ENCODE measurements at regions of chr19 and their contacts with region 1.

Region 1: DNA sequence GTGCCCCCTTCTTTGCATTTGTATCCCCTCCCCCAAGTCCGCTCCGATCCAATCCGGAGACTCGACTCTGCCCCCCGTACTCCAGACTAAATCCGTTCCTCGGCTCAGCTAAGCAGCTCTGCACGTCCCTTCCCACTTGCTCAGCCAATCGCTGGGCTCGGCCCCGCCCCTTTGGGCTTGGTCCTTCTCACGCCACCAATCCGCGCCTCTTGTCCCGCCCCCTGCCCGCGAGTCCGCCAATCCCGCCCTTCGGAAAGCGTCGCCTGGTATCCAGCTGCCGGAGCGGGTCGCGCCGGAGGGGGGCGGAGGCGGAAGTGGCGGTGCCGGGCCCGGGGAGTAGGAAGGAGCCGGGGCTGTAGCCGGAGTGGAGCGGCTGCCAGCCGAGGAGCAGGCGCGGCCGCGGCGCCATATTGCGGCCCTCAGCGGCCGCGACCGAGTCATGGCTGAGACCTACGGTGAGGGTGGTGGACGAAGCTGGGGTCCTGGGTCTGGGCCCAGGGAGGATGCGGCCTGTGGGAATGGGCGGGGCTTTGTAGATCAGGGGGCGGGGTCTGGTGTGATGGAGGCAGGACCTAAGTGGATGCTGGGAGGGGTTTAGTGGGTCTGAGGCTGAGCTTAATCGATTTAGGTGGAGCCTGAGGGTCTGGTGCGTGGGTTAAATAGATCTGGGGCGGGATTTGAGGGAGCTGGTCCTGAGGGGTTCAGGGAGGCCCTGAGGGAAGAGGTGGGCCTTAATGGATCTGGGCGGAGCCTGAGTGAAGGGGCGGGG is at the start of gene RAB4B:
- DNase-seq: peak; percentile 100
- H3K4me3 ChIP-seq: peak within 1 kb of the TSS; percentile 63 to 80 (median 68)
- H3K27ac ChIP-seq: peak within 1 kb of the TSS; percentile 94 to 99 (median 96)
- H3K4me1 ChIP-seq: peaks cover 0 to 22% (median 14%) of the 10 kb centered on the region in 4 donors
- H3K27me3 ChIP-seq: no peaks in the 10 kb centered on the region
- CTCF ChIP-seq: no peak
- EP300 ChIP-seq: no peak
- POLR2A ChIP-seq: peak; percentile 17 to 87
- total RNA-seq, gene RAB4B: 15.6 to 21.3 (median 19.2) TPM

Region 2: DNA sequence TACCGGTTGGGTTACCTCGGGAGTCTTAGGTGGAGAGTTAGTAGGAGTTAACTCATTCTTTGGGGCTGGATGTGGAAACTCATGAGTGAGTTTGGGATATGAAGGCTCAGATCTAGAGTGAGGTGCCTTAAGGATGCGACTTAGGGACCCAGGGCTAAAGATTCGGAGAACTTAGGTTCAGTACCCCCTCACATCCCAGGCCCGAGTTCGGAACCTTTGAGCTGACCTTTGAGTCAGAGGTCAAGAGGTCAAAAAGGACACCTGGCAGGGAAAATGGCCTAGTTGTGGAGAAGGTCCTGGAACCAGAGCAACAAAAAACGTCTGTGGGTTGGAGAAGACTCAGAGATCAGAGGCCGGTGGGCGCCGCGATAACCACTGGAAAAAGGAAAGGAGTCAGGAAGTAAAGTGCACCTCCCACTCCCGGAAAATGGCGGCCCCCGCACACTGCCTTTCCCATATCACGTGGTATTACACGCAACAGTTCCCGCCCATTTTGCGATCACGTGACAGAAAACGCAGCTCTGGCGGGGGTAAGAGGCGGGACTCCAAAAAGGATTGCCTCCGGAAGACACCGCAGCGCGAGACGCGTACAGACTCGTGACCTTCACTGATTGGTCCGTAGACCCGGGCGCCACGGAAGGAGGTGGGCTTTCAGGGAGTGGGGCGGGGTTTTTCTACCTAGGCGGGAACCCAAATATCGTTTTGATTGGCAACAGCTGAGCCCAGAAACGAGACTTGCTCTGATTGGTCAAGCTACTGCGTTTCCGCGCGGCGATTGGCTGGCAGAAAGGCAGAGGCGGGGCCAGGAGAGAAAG is 27.9 kb before region 1 on chr19 and contains the start of gene ACTMAP:
- intact Hi-C with region 1: loop called (anchors 2 kb)
- DNase-seq: peak; percentile 100
- H3K4me3 ChIP-seq: peak within 1 kb of the TSS; percentile 64 to 73 (median 71)
- H3K27ac ChIP-seq: peak within 1 kb of the TSS; percentile 86 to 96 (median 94)
- H3K4me1 ChIP-seq: peaks cover 0 to 57% (median 45%) of the 10 kb centered on the region in 4 donors
- H3K27me3 ChIP-seq: no peaks in the 10 kb centered on the region
- CTCF ChIP-seq: no peak
- EP300 ChIP-seq: peak in 2 of 4 donors; percentile 8 to 78
- POLR2A ChIP-seq: peak; percentile 66 to 81
- total RNA-seq, gene ACTMAP: 1.8 to 5.3 (median 3.0) TPM

Region 3: GRCh38 chr19:41192574-41193429 is 414.7 kb after region 1 on chr19 and contains the start of gene CYP2S1:
- intact Hi-C with region 1: no loop called
- DNase-seq: no peak
- H3K4me3 ChIP-seq: peak within 1 kb of the TSS in 3 of 4 donors; percentile 2 to 29 (median 27)
- H3K27ac ChIP-seq: no peak within 1 kb of the TSS
- H3K4me1 ChIP-seq: peaks cover 0 to 12% (median 9%) of the 10 kb centered on the region in 4 donors
- H3K27me3 ChIP-seq: peaks cover 0 to 55% (median 28%) of the 10 kb centered on the region in 3 donors
- CTCF ChIP-seq: no peak
- EP300 ChIP-seq: no peak
- POLR2A ChIP-seq: peak in 1 of 2 donors; percentile 59
- total RNA-seq, gene CYP2S1: 0.41 to 1.4 (median 0.80) TPM